Heart left ventricle (tissue), 16 donors: ENCODE measurements at regions of chr10 and their contacts with region 1.

Region 1: DNA sequence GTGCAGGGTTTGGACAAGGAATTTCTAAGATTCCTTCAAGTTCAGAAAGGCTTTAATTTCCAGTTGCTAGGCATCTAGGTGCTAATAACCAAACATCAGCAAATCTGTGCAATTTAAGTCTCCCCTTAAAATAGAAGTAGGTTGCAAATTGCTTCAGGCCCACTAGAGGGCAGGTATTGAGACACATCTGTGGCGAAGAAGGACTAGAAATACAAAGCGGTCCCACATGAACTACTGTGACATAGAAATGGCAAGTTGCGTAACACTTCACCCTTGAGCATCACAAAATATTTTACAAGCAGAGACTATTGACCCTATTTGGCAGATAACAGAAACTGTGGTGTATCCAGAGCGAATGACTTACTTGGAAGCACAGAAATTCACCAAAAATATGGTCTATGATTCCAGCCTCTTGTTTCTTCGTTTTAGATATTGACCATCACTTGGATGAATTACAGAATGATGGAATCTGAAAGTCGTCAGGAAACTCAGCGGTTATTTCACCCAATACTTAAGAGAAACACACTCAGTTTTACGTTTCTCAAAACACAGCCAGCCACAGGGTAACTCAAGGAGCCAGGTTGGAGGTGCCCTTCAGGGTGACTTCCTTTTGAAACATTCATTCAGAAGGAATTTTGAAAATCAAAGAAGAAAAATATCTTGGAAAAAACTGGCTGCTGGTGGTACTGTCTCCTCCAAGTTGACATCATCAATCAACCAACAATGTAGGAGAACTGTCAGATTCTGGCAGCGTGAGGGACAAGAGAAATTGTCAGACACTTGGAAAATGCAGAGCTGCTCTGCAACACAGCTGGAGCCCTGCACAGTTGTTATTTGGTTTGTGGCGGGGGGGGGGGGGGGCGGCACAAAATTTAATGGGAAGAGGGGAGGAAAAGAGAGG is 256.3 kb upstream of the MINDY3 start:
- DNase-seq: no peak
- ATAC-seq: peak in 1 of 4 donors; percentile 62
- H3K4me3 ChIP-seq: no peak overlapping the region
- H3K27ac ChIP-seq: peak overlapping the region in 1 of 12 donors; percentile 10
- H3K4me1 ChIP-seq: no peaks in the 10 kb centered on the region
- H3K27me3 ChIP-seq: peaks cover 0 to 4% (median 0%) of the 10 kb centered on the region in 9 donors
- CTCF ChIP-seq: peak; percentile 25 to 56 (median 40)
- POLR2A ChIP-seq: no peak

Region 2: GRCh38 chr10:16011548-16011947 is 105.1 kb before region 1 on chr10:
- intact Hi-C with region 1: no loop called
- DNase-seq: no peak
- ATAC-seq: no peak
- H3K4me3 ChIP-seq: no peak overlapping the region
- H3K27ac ChIP-seq: no peak overlapping the region
- H3K4me1 ChIP-seq: no peaks in the 10 kb centered on the region
- H3K27me3 ChIP-seq: no peaks in the 10 kb centered on the region
- CTCF ChIP-seq: no peak
- POLR2A ChIP-seq: no peak

Region 3: GRCh38 chr10:16030562-16030961 is 86.1 kb before region 1 on chr10:
- intact Hi-C with region 1: no loop called
- DNase-seq: no peak
- ATAC-seq: no peak
- H3K4me3 ChIP-seq: no peak overlapping the region
- H3K27ac ChIP-seq: no peak overlapping the region
- H3K4me1 ChIP-seq: no peaks in the 10 kb centered on the region
- H3K27me3 ChIP-seq: no peaks in the 10 kb centered on the region
- CTCF ChIP-seq: no peak
- POLR2A ChIP-seq: no peak

Region 4: GRCh38 chr10:16408379-16408778 is 291.7 kb after region 1 on chr10:
- intact Hi-C with region 1: no loop called
- DNase-seq: no peak
- ATAC-seq: no peak
- H3K4me3 ChIP-seq: no peak overlapping the region
- H3K27ac ChIP-seq: no peak overlapping the region
- H3K4me1 ChIP-seq: no peaks in the 10 kb centered on the region
- H3K27me3 ChIP-seq: peaks cover 0 to 11% (median 0%) of the 10 kb centered on the region in 9 donors
- CTCF ChIP-seq: no peak
- POLR2A ChIP-seq: no peak

Region 5: GRCh38 chr10:16545116-16545736 is 428.6 kb after region 1 on chr10:
- intact Hi-C with region 1: loop called in 2 of 10 experiments (anchors 5 to 10 kb)
- DNase-seq: no peak
- ATAC-seq: peak in 1 of 4 donors; percentile 61
- H3K4me3 ChIP-seq: no peak overlapping the region
- H3K27ac ChIP-seq: no peak overlapping the region
- H3K4me1 ChIP-seq: peaks cover 0 to 5% (median 0%) of the 10 kb centered on the region in 12 donors
- H3K27me3 ChIP-seq: peaks cover 0 to 12% (median 0%) of the 10 kb centered on the region in 9 donors
- CTCF ChIP-seq: peak; percentile 35 to 63 (median 50)
- POLR2A ChIP-seq: no peak

Region 6: GRCh38 chr10:16770670-16771069 is 654.0 kb after region 1 on chr10:
- intact Hi-C with region 1: loop called in 8 of 10 experiments (anchors 5 to 10 kb)
- DNase-seq: no peak
- ATAC-seq: no peak
- H3K4me3 ChIP-seq: no peak overlapping the region
- H3K27ac ChIP-seq: no peak overlapping the region
- H3K4me1 ChIP-seq: peaks cover 0 to 15% (median under 1%) of the 10 kb centered on the region in 12 donors
- H3K27me3 ChIP-seq: no peaks in the 10 kb centered on the region
- CTCF ChIP-seq: no peak
- POLR2A ChIP-seq: no peak

Region 7: GRCh38 chr10:16777473-16778370 is 661.1 kb after region 1 on chr10:
- intact Hi-C with region 1: loop called in 8 of 10 experiments (anchors 5 to 10 kb)
- DNase-seq: peak in 3 of 5 donors; percentile 46 to 61 (median 53)
- ATAC-seq: peak; percentile 69 to 96 (median 79)
- H3K4me3 ChIP-seq: peak overlapping the region in 1 of 12 donors; percentile 12
- H3K27ac ChIP-seq: peak overlapping the region in 10 of 12 donors; percentile 5 to 57 (median 34)
- H3K4me1 ChIP-seq: peaks cover 0 to 31% (median 11%) of the 10 kb centered on the region in 12 donors
- H3K27me3 ChIP-seq: no peaks in the 10 kb centered on the region
- CTCF ChIP-seq: peak; percentile 70 to 85 (median 81)
- POLR2A ChIP-seq: no peak